K562 (cell line): ENCODE measurements at regions of chr3 and their contacts with region 1.

Region 1: DNA sequence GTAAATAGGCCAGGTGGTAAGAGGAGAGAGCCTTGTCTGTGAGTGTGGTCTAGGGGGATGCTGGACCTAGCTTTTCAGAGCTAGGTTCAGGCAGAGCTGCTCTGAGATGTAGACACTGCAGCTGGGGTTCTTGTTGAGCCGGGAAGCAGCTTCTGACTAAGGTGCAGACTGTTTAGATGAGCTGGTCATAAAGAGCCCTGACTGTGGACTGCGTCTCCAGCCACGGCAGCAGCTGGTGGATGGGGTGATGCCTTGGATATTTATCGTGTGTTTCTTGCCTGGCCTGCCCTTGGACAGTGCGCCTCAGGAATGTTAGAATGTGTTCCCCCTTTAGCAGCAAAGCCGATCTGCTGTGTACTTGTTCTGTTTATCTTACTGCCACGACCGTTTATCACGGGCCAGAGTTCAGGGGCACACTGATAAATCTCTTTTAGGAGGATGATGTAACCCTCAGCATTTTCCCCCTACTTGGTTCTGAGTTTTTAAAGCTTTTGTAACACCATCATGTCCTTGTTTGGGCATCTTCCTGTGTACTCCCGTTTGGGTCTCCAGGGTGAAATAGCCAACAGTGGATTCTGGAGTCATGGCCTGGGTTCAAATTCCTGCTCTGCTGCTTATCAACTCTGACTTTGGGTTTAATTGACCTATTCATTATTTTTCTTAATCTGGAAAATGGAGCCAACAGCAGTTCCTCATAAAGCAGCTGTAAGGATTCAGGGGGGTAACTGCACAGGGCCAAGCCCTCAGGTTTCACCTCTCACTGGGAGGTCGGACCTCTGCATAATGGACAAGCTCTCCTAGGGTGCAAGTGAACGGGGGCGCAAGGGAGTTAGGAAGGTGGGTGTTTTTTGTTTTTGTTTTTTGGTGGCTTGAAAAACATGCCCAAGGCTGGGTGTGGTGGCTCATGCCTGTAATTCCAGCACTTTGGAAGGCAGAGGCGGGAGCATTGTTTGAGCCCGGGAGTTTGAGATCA is 51.4 kb downstream of the FLNB start:
- DNase-seq: peak in 2 of 4 experiments; percentile 17 to 56
- ATAC-seq: peak; percentile 82
- H3K4me3 ChIP-seq: no peak overlapping the region
- H3K27ac ChIP-seq: peak overlapping the region; percentile 56
- H3K4me1 ChIP-seq: peaks cover 14 to 35% of the 10 kb centered on the region in 2 experiments
- H3K27me3 ChIP-seq: no peaks in the 10 kb centered on the region
- CTCF ChIP-seq: no peak
- EP300 ChIP-seq: peak; percentile 93
- POLR2A ChIP-seq: no peak
- RAD21 ChIP-seq: no peak

Region 2: DNA sequence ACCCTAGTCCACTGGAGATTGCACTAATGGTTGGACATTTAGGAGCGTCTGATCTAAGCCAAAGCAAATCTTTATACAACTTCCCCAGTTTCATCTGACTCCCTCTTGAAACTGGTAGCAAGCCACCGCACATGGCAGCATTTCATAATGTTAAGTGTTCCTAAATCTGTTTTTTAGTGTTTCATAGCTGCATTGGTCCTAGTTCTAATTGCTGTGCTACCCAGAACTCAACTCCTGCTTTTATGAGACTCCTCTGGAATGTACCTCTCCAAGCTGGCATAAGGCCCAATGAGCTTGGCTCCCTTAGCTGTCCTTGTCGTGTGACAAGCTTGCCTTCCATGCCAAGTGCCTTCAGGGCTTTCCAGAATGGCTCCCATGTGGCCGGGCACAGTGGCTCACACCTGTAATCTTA is 116.8 kb before region 1 on chr3:
- CTCF ChIA-PET with region 1: no interaction called
- POLR2A ChIA-PET with region 1: no interaction called
- in situ Hi-C with region 1: no loop called
- intact Hi-C with region 1: no loop called
- DNase-seq: no peak
- ATAC-seq: no peak
- H3K4me3 ChIP-seq: no peak overlapping the region
- H3K27ac ChIP-seq: no peak overlapping the region
- H3K4me1 ChIP-seq: peaks cover 0 to 4% of the 10 kb centered on the region in 2 experiments; a peak in 3 of 5 replicates
- H3K27me3 ChIP-seq: no peaks in the 10 kb centered on the region
- CTCF ChIP-seq: no peak
- EP300 ChIP-seq: no peak
- POLR2A ChIP-seq: no peak
- RAD21 ChIP-seq: no peak

Region 3: DNA sequence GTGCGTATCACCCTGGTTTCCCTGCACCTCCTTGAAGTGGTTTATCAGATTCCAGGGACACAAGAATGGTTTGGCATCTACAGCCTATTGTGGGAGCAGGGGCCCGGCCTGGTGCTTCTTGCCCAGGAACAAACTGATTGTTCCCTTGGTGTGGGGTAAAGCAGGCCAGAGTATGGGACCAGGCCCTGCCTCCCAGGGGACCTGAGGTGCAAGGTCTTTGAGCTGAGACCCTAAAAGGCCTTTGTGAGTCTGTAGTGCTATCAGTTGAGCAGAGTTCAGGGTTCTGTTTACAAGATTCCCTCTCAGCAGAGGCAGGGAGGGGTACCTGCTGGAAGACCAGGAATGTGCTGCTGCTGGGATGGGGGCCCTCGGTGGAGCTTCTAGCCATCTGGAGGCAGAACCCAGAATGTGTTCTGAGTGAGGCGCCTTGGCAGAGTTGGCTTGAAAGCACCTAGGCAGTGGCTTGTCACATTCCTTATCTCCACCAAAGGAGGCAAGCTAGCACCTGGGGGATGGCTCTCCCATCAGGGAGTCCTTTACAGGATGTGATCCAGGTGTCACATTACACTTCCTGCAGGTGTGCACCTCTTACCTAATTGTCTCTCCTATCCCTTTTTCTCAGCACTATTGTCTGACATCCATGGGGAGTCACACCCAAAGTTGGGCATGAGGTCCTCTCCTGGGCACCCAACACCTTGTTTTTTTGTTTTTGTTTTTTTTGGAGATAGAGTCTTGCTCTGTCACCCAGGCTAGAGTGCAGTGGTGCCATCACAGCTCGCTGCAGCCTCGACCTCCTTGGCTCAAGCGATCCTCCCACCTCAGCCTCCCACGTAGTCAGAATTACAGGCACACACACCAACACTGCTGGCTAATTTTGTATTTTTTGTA is 38.3 kb before region 1 on chr3:
- CTCF ChIA-PET with region 1: no interaction called
- POLR2A ChIA-PET with region 1: interaction called, 6 read pairs
- in situ Hi-C with region 1: no loop called
- intact Hi-C with region 1: loop called (anchors 5 kb)
- DNase-seq: no peak
- ATAC-seq: no peak
- H3K4me3 ChIP-seq: no peak overlapping the region
- H3K27ac ChIP-seq: no peak overlapping the region
- H3K4me1 ChIP-seq: peaks cover 0 to 7% of the 10 kb centered on the region in 2 experiments; a peak in 2 of 5 replicates
- H3K27me3 ChIP-seq: no peaks in the 10 kb centered on the region
- CTCF ChIP-seq: no peak
- EP300 ChIP-seq: no peak
- POLR2A ChIP-seq: no peak
- RAD21 ChIP-seq: no peak